Head of caudate nucleus (tissue), 42 donors: ENCODE measurements at regions of chr19 and their contacts with region 1.

Region 1: DNA sequence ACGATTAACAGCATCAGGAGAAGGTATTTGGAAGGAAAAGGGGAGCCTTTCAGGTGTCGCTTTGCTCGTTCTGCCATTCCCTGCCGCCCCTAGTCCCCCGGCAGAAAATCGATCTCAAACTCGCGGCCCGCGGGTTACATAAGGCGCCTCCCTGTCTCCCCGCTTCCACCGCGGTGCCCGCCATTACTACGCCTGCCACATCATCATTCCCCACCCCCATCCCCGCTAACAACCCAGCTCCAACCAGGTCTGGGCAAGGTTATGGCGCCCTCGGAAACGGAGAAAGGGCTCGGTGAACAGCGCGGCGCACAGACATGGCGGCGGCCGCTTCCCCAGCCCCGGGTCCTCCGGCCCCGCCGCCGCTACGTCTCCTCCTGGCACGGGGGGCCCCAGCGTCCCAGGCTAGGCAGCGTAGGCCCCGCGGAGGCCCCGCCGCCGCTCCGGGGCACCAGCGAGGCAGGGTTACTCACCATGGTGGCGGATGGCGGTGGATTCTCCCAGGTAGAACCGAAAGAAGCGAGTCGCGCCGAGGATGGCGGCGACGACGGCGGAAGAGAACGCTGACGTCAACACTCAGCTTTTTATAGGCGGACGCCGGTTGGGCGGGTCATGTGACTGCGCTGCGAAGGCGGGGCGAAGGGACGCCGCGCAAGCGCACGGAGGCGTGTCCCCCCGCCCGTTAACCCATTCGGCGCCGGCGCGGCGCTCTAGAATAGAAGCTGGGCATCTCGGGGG is at the start of gene EEF2:
- DNase-seq: peak; percentile 76 to 96 (median 89)

Region 2: DNA sequence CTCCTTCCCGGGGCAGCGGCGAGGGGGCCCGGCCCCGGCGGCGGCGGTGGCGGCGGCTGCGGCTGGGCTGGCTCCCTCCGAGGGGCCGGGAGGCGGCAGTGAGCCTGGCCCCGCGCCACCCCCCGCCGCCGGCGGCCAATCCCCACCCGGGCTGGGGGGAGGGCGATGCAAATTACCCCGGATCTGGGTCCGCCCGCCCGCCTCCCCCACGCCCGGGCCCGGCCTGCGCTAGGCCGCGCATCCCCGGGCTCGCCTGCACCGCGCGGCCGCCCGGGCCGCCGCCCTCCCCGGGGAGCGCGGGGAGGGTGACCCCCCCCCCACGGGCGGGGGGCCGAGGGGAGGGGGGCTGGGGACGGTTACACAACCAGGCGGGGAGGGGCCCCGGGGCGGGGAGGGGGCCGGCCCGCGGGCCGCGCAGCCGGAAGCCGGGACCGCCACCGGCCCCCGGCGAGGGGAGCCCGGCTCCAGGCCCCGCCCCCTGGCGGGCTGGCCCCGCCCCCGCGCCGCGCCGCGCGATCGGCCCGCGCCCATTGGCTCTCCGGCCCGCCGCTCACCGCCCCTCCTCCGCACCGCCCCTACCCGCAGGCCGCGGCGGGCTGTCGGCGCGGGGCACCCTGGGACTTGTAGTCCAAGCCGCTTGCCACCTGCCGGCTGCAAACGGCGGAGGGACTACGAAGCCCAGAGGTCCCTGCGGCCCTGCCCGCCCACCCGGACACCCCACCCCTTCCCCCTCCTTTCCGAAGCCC is 80.5 kb after region 1 on chr19:
- intact Hi-C with region 1: loop called (anchors 5 kb)
- DNase-seq: peak; percentile 84 to 99 (median 97)

Region 3: DNA sequence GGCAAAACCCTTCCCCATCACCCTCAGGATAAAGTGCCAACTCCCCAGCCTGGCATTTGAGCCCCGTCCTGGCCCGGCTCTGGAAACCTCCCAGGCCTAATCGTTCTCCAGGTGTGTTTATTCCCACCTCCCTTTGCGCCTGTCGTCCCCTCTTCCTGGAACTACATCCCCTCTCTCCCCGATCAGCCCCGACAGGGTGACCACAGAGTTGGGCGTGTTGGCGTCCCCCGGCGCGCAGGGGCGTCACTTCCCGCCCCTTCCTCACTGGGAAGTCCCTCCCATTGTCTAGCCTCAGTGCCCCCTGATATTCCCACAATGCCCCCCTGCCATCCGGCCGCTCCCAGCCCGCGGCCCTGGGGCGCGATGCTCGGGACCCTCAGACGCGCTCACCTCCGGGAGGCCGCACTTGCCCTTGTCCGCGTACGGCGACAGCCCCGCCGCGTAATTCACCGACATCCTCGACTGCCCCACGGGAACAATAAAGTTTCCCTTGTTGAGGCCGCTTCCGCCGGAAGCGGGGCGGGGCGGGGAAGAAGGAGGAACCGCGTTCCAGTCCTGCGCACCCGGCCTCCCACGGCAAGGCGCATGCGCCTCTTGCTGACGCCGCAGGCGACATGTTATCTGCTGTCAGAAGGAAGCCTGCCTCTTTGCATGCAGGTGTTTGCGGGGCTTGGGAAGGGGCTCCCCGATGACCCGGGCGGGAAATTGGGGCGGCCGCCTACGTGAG is 197.2 kb after region 1 on chr19 and contains the starts of genes ANKRD24 and SIRT6:
- intact Hi-C with region 1: loop called (anchors 5 kb)
- DNase-seq: peak; percentile 84 to 99 (median 97)